ENCODE measurements at regions of chr3 and their contacts with region 1.

Region 1: GRCh38 chr3:85050821-85051220 is 92.0 kb downstream of the CADM2 start:
- DNase-seq: no peak
- ATAC-seq: no peak
- H3K4me3 ChIP-seq: no peak overlapping the region
- H3K27ac ChIP-seq: no peak overlapping the region
- H3K4me1 ChIP-seq: no peaks in the 10 kb centered on the region
- H3K27me3 ChIP-seq: no peaks in the 10 kb centered on the region
- CTCF ChIP-seq: no peak

Region 2: DNA sequence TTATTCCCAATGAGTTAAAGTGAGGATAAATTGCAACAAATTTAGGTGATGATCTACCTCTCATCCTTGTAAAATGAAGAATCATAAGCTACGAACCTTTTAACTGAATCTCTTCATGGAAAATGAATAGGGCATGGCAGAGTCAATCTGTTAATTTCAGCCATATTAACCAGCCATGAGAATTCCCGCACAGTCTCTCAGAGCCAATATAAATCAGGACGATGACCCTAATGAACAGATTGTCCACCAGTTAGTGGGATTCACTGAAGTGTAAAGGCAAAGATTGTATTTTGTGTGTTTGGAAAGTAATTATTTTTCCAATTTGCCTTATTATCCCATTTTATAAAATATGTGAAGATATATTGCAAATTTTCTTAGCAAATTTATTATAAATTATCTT is 91.8 kb after region 1 on chr3:
- intact Hi-C with region 1: loop called in 1 of 10 experiments (anchors 5 kb)
- DNase-seq: no peak
- ATAC-seq: no peak
- H3K4me3 ChIP-seq: no peak overlapping the region
- H3K27ac ChIP-seq: no peak overlapping the region
- H3K4me1 ChIP-seq: no peaks in the 10 kb centered on the region
- H3K27me3 ChIP-seq: no peaks in the 10 kb centered on the region
- CTCF ChIP-seq: no peak